Pancreas (tissue), 10 donors: ENCODE measurements at regions of chr12 and their contacts with region 1.

Region 1: DNA sequence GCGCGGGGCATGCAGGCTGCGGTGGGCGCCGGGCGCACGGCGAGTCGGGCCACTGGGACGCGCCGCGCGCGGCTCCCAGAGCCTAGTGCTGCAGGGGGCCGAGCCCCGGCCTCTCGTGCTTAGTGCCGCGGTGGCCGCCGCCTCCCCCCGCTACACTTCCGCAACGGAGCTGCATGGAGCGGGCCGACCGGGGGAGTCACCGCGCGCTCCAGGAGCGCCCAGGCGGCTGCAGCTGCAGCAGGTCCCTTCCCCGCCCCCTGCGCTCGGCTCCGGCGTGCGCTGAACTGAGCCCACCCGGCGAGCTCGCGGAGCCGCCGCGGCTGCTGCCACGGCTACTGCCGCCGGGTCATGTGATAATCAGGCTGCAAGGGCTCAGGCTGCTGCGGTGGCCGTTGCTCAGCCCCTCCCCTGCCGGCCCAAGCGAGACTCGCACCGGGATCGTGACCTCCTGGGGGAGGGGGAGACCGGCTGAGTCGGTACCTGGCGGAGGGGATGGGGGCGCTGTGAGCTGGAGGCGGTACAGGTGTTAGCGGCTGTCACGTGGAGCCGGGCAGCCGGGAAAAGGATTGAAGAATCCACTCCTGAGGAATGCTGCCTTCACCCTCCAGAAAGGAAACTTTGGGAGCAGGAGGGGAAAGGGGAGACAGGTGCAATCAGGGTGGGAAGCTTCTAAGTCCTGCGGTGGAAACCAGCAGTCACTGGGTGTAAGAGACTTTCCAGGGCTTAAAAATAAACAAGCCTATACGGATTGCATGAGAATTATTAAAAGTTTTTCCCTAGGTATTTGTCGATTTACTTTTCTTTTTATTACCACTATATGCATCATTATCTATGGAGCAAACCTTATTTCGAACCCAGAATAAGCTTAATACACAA is at the start of gene PPM1H:
- DNase-seq: peak; percentile 91 to 97 (median 93)
- ATAC-seq: peak; percentile 93 to 96 (median 95)
- H3K4me3 ChIP-seq: peak within 1 kb of the TSS; percentile 75 to 97 (median 86)
- H3K27ac ChIP-seq: peak within 1 kb of the TSS; percentile 18 to 77 (median 62)
- H3K4me1 ChIP-seq: peaks cover 0 to 8% (median 5%) of the 10 kb centered on the region in 3 donors
- H3K27me3 ChIP-seq: no peaks in the 10 kb centered on the region
- CTCF ChIP-seq: peak; percentile 48 to 78 (median 70)
- total RNA-seq, gene PPM1H: 5.2 to 12.9 (median 6.3) TPM

Region 2: DNA sequence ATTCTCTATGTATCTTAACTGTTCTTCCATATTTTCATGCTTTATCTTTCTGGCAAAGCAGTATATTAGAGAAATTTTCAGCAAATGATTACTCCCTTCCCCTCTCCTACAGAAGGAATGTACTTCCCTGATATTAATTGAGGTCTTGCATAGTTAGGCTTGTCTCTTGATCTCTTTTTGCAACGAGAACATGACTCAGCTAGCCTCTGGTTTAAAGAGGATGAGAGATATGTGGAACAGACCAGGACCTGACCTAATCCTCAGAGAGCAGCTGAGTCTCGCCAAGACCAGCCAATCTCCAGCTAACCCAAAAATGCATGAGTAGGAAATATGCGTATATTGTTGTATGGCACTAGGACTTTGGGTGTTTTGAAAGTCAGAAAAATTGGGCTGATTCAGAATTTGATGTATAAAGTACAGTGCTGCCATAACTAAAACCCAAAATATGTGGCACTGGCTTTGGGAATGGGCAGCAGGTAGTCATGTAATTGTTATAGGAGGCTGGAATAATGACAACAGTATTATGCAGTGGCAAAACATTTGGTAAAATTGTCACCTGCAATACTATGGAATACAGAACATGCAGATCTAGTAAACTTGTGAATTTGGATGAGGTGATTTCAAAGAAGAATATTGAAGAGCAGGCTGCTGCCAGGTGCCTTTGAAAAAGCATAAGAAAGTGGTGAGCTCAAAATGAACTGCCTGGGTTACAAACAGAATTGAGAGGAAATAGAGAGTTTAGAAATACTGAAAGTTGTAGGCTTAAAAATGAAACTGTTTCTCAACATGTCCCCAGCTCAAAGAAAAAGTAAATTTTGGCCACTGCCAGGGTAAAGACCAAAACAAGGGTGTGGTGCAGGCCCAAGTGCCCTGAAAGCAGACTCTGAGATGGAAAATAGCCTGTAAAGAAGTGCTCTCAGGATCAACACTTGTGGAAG is 684.1 kb before region 1 on chr12:
- intact Hi-C with region 1: no loop called
- DNase-seq: no peak
- ATAC-seq: peak in 1 of 4 donors; percentile 55
- H3K4me3 ChIP-seq: no peak overlapping the region
- H3K27ac ChIP-seq: no peak overlapping the region
- H3K4me1 ChIP-seq: peaks cover under 1 to 4% (median 2%) of the 10 kb centered on the region in 3 donors
- H3K27me3 ChIP-seq: no peaks in the 10 kb centered on the region
- CTCF ChIP-seq: no peak

Region 3: DNA sequence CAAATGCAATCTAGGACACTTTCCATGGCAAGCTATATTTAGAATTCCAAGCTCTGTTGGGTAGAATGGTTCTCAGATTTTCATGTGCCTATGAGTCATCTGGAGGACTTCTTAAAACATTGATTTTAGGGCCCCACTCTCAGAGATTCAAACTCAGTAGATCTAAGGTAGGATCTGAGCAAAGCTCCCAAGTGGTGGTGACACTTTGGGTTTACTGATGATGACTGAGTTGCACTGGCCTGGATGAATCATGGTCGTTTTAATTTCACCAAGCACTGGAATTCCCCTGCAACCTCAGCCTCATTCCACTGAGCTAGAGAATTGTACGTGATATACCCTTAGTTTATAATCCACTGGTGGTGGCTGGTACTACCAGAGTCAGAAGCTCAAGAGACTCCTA is 86.6 kb before region 1 on chr12:
- intact Hi-C with region 1: no loop called
- DNase-seq: no peak
- ATAC-seq: peak in 2 of 4 donors; percentile 63 to 77
- H3K4me3 ChIP-seq: no peak overlapping the region
- H3K27ac ChIP-seq: peak overlapping the region in 1 of 4 donors; percentile 48
- H3K4me1 ChIP-seq: peaks cover 2 to 4% (median 3%) of the 10 kb centered on the region in 3 donors
- H3K27me3 ChIP-seq: no peaks in the 10 kb centered on the region
- CTCF ChIP-seq: no peak

Region 4: DNA sequence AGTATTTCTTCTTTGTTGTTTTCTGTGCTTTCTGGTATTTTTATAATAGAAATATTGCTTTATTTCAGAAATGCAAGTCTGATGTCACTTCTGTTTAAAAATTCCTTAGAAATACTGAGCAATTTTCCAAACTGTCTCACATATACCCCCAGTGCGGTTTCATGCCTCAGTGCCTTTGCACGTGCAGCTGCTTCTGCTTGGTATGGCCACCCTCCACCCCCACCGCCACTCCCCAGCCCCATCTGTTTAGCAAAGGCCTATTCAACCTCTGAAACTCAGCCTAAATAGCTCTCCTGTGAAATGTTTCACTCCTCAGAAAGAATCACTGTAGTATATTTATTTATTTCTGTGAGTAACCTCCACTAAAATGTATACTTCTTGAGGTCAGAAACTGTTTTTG is 52.3 kb before region 1 on chr12:
- intact Hi-C with region 1: loop called in 1 of 3 experiments (anchors 10 kb)
- DNase-seq: no peak
- ATAC-seq: no peak
- H3K4me3 ChIP-seq: no peak overlapping the region
- H3K27ac ChIP-seq: no peak overlapping the region
- H3K4me1 ChIP-seq: no peaks in the 10 kb centered on the region
- H3K27me3 ChIP-seq: no peaks in the 10 kb centered on the region
- CTCF ChIP-seq: no peak